T-cell (primary cell): ENCODE measurements at regions of chr21 and their contacts with region 1.

Region 1: DNA sequence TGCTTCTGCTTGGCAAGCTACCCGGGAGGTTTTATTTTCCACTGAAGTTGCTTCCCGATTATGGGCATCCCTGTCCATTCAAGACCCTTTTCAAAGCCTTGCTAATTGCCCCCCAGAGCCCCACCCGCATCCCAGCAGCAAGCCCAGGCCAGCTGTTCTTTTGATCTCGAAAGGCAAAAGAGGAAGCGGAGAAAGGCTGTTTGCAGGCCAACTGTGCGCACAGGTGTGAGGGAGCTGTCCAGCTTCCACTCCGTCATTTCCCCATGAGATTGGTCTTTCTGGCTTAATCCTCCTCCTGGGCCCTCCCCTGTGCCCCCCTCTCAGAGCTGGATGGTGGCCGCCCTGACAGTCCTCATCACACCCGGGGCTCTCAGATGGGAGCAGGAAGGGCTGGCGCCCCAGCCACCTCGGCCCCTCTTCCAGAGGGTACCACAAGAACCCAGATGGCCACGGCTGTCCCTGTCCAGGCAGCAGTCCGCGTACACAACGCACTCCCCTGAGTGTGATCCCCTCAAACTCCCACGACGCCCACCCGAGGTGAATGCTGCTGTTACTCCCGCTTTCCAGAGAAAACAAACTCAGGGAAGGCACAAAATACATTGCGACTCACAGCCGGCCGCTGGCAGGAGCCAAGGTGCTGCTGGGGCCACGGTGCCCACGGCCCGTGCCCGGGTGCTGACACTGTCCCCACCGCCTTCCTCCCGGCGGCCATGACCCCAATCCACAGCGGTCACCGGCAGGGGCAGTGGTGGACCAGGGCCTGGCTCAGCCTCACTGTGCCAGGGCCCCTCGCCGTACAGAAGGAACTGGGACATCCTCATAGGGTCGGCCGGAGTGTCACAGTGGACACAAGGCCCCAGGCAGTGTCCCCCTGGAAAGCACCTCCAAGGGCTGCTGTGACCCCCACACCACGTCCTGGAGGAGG is 121.9 kb downstream of the CRYAA start:
- DNase-seq: peak in 1 of 35 experiments; percentile 12
- ATAC-seq: no peak
- H3K4me3 ChIP-seq: no peak overlapping the region
- H3K4me3 Mint-ChIP-seq: no peak overlapping the region
- H3K27ac ChIP-seq: no peak overlapping the region
- H3K27ac Mint-ChIP-seq: no peak overlapping the region
- H3K4me1 ChIP-seq: no peaks in the 10 kb centered on the region
- H3K4me1 Mint-ChIP-seq: peaks cover 4 to 5% (median 5%) of the 10 kb centered on the region in 3 donors
- H3K27me3 ChIP-seq: peaks cover 0 to 22% of the 10 kb centered on the region in 2 experiments
- H3K27me3 Mint-ChIP-seq: peaks cover 0 to 2% of the 10 kb centered on the region in 2 donors

Region 2: GRCh38 chr21:42905195-42905594 is 385.5 kb before region 1 on chr21:
- CTCF ChIA-PET with region 1: no interaction called
- POLR2A ChIA-PET with region 1: interaction called in 1 of 2 experiments, 11 read pairs
- DNase-seq: no peak
- ATAC-seq: no peak
- H3K4me3 ChIP-seq: no peak overlapping the region
- H3K4me3 Mint-ChIP-seq: no peak overlapping the region
- H3K27ac ChIP-seq: no peak overlapping the region
- H3K27ac Mint-ChIP-seq: no peak overlapping the region
- H3K4me1 ChIP-seq: no peaks in the 10 kb centered on the region
- H3K4me1 Mint-ChIP-seq: peaks cover 2 to 11% (median 6%) of the 10 kb centered on the region in 3 donors
- H3K27me3 ChIP-seq: no peaks in the 10 kb centered on the region
- H3K27me3 Mint-ChIP-seq: no peaks in the 10 kb centered on the region

Region 3: GRCh38 chr21:43277481-43278351 is 13.0 kb before region 1 on chr21:
- CTCF ChIA-PET with region 1: no interaction called
- POLR2A ChIA-PET with region 1: no interaction called
- DNase-seq: no peak
- ATAC-seq: no peak
- H3K4me3 ChIP-seq: no peak overlapping the region
- H3K4me3 Mint-ChIP-seq: no peak overlapping the region
- H3K27ac ChIP-seq: no peak overlapping the region
- H3K27ac Mint-ChIP-seq: no peak overlapping the region
- H3K4me1 ChIP-seq: peaks cover 0 to 6% of the 10 kb centered on the region in 2 experiments
- H3K4me1 Mint-ChIP-seq: peaks cover 0 to 7% (median 2%) of the 10 kb centered on the region in 3 donors
- H3K27me3 ChIP-seq: peaks cover 0 to 57% of the 10 kb centered on the region in 2 experiments
- H3K27me3 Mint-ChIP-seq: peaks cover 3 to 29% of the 10 kb centered on the region in 2 donors

Region 4: GRCh38 chr21:43306911-43307676 is 16.4 kb after region 1 on chr21:
- CTCF ChIA-PET with region 1: no interaction called
- POLR2A ChIA-PET with region 1: no interaction called
- DNase-seq: no peak
- ATAC-seq: no peak
- H3K4me3 ChIP-seq: no peak overlapping the region
- H3K4me3 Mint-ChIP-seq: no peak overlapping the region
- H3K27ac ChIP-seq: no peak overlapping the region
- H3K27ac Mint-ChIP-seq: no peak overlapping the region
- H3K4me1 ChIP-seq: no peaks in the 10 kb centered on the region
- H3K4me1 Mint-ChIP-seq: peaks cover 0 to 2% (median 0%) of the 10 kb centered on the region in 3 donors
- H3K27me3 ChIP-seq: peaks cover 0 to 30% of the 10 kb centered on the region in 2 experiments
- H3K27me3 Mint-ChIP-seq: peaks cover 5 to 19% of the 10 kb centered on the region in 2 donors